Activated CD4-positive, alpha-beta memory T cell treated with anti-CD3 and anti-CD28 coated beads, Interleukin-2, amount 10 ng/mL, durations not matched to agents 7 days and 5 days (primary cell): ENCODE measurements at regions of chr15 and their contacts with region 1.

Region 1: DNA sequence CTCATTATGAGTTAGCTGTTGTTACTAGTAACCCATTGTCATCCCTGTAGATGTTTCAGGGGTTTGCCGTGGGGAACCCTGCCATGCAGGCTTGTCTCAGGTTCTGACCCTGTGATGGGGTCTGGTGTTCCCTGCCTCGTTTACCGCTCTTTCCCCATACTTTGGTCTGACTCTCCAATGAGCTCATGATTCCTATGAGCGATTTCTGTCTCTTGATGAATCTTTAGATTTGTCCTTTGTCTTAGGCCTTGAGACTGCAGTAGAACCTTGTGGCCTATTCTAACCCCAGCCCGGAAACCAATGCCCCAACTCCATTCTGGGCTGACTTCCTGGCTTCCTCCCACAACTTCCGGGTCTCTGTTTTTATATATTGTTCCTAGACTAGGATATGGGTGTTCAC is 11.3 kb upstream of the IQGAP1 start:
- DNase-seq: peak; percentile 85
- H3K4me3 Mint-ChIP-seq: peak overlapping the region; percentile 23
- H3K27ac Mint-ChIP-seq: peak overlapping the region; percentile 86
- H3K4me1 Mint-ChIP-seq: peaks cover 46% of the 10 kb centered on the region
- H3K27me3 Mint-ChIP-seq: no peaks in the 10 kb centered on the region

Region 2: DNA sequence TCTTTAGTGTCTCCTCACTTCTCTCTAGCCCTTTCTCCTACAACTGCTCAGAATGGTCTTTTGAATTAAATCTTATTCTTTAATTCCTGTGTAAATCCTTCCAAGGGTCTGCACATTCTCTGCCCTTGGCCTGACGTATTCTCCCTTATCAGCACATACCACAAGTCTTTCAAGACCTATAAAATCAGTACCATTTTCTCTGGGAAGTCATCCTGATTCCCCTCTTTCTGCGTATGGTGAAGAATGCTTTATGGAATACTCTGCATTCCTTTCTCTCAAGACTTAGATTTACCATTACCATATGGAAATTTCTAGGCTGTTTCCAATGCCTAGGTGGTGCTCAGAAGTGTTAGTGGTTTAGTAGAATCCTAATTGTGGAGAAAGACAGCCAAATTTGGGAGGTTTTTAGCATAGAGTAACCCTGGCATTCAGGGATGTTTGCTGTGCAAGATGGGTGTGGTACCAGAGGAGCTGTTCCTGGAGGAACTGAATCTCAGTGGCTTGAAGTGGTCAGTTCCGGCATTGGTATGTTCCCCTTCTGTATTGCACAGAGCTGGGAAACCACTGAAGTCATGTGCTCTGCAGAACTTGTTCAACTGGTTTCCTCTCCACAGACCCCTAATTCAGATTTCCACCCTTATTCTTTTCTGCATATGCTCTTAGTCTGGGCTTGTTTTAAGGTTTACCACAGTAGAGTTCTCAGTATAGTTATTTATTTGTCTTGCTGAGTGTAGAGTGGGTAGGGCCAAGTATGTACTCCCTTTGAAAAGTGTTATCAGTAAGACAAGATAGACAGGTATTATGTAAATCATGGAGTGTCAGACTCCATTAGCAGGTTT is 35.8 kb after region 1 on chr15:
- CTCF ChIA-PET with region 1: no interaction called
- POLR2A ChIA-PET with region 1: interaction called, 12 read pairs
- DNase-seq: no peak
- H3K4me3 Mint-ChIP-seq: no peak overlapping the region
- H3K27ac Mint-ChIP-seq: peak overlapping the region; percentile 34
- H3K4me1 Mint-ChIP-seq: peaks cover 73% of the 10 kb centered on the region
- H3K27me3 Mint-ChIP-seq: no peaks in the 10 kb centered on the region